B cell (primary cell): ENCODE measurements at regions of chr14 and their contacts with region 1.

Region 1: GRCh38 chr14:92612988-92613658 is 99.5 kb downstream of the RIN3 start:
- DNase-seq: peak; percentile 68
- ATAC-seq: no peak
- H3K4me3 ChIP-seq: no peak overlapping the region
- H3K4me3 Mint-ChIP-seq: peak overlapping the region; percentile 69
- H3K27ac ChIP-seq: peak overlapping the region in 1 of 2 donors; percentile 65
- H3K27ac Mint-ChIP-seq: peak overlapping the region; percentile 70
- H3K4me1 ChIP-seq: peaks cover 55 to 67% of the 10 kb centered on the region in 2 donors
- H3K4me1 Mint-ChIP-seq: peaks cover 73% of the 10 kb centered on the region
- H3K27me3 ChIP-seq: no peaks in the 10 kb centered on the region
- H3K27me3 Mint-ChIP-seq: no peaks in the 10 kb centered on the region
- CTCF ChIP-seq: peak; percentile 79

Region 2: DNA sequence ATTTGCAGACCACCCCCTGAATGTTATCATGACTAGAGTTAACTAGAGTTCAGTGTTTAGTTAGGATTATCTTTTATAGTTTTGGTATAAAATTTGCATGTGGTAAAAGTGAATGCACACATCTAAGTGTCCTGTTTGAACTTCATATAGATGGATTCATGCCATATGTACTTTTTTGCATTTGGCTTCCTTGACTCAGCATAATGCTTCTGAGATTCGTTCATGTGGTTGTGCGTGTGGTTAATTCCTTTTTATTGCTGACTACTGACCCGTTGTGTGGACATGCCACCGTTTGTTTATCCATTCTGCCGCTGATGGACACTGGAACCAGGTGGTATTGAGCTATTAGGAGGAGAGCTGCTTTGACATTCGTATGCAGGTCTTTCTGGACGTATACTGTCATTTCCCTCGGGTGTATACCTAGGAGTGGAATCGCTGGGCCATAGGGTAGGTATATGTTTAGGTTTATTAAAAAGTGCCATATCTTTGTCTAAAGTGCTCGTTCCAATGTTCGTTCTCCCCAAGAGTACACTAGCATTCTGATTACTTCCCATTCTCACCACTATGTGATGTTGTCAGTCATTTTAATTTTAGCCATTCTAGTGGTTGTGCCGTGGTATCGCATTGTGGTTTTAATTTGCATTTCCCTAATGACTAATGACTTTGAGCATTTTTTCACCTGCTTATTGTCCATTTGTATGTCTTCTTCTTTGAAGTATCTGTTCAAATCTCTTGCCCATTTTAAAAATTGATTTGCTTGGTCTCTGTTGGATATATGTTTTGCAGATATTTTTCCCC is 61.9 kb before region 1 on chr14:
- CTCF ChIA-PET with region 1: no interaction called
- POLR2A ChIA-PET with region 1: no interaction called
- intact Hi-C with region 1: loop called (anchors 10 kb)
- DNase-seq: peak; percentile 78
- ATAC-seq: peak; percentile 74
- H3K4me3 ChIP-seq: no peak overlapping the region
- H3K4me3 Mint-ChIP-seq: peak overlapping the region; percentile 38
- H3K27ac ChIP-seq: no peak overlapping the region
- H3K27ac Mint-ChIP-seq: no peak overlapping the region
- H3K4me1 ChIP-seq: peaks cover 36 to 38% of the 10 kb centered on the region in 2 donors
- H3K4me1 Mint-ChIP-seq: peaks cover 38% of the 10 kb centered on the region
- H3K27me3 ChIP-seq: peaks cover 0 to 17% (median 6%) of the 10 kb centered on the region in 4 experiments
- H3K27me3 Mint-ChIP-seq: peaks cover 29% of the 10 kb centered on the region
- CTCF ChIP-seq: peak; percentile 76

Region 3: GRCh38 chr14:92585981-92586937 is 26.9 kb before region 1 on chr14:
- CTCF ChIA-PET with region 1: interaction called, 29 read pairs
- POLR2A ChIA-PET with region 1: no interaction called
- intact Hi-C with region 1: no loop called
- DNase-seq: no peak
- ATAC-seq: no peak
- H3K4me3 ChIP-seq: no peak overlapping the region
- H3K4me3 Mint-ChIP-seq: peak overlapping the region; percentile 20
- H3K27ac ChIP-seq: peak overlapping the region in 1 of 2 donors; percentile 5
- H3K27ac Mint-ChIP-seq: peak overlapping the region; percentile 72
- H3K4me1 ChIP-seq: peaks cover 61 to 74% of the 10 kb centered on the region in 2 donors
- H3K4me1 Mint-ChIP-seq: peaks cover 77% of the 10 kb centered on the region
- H3K27me3 ChIP-seq: no peaks in the 10 kb centered on the region
- H3K27me3 Mint-ChIP-seq: no peaks in the 10 kb centered on the region
- CTCF ChIP-seq: no peak

Region 4: GRCh38 chr14:92637228-92637627 is 24.1 kb after region 1 on chr14:
- CTCF ChIA-PET with region 1: interaction called, 10 read pairs
- POLR2A ChIA-PET with region 1: interaction called, 3 read pairs
- intact Hi-C with region 1: loop called (anchors 2 kb)
- DNase-seq: no peak
- ATAC-seq: no peak
- H3K4me3 ChIP-seq: no peak overlapping the region
- H3K4me3 Mint-ChIP-seq: no peak overlapping the region
- H3K27ac ChIP-seq: no peak overlapping the region
- H3K27ac Mint-ChIP-seq: no peak overlapping the region
- H3K4me1 ChIP-seq: peaks cover 31 to 32% of the 10 kb centered on the region in 2 donors
- H3K4me1 Mint-ChIP-seq: peaks cover 34% of the 10 kb centered on the region
- H3K27me3 ChIP-seq: no peaks in the 10 kb centered on the region
- H3K27me3 Mint-ChIP-seq: no peaks in the 10 kb centered on the region
- CTCF ChIP-seq: no peak

Region 5: GRCh38 chr14:92656306-92657081 is 43.4 kb after region 1 on chr14:
- CTCF ChIA-PET with region 1: interaction called, 68 read pairs
- POLR2A ChIA-PET with region 1: interaction called, 16 read pairs
- intact Hi-C with region 1: loop called (anchors 1 kb)
- DNase-seq: peak; percentile 22
- ATAC-seq: no peak
- H3K4me3 ChIP-seq: peak overlapping the region in 2 of 5 experiments; percentile 41 to 80
- H3K4me3 Mint-ChIP-seq: peak overlapping the region; percentile 79
- H3K27ac ChIP-seq: peak overlapping the region in 1 of 2 donors; percentile 78
- H3K27ac Mint-ChIP-seq: peak overlapping the region; percentile 76
- H3K4me1 ChIP-seq: peaks cover 57 to 87% of the 10 kb centered on the region in 2 donors
- H3K4me1 Mint-ChIP-seq: peaks cover 73% of the 10 kb centered on the region
- H3K27me3 ChIP-seq: no peaks in the 10 kb centered on the region
- H3K27me3 Mint-ChIP-seq: no peaks in the 10 kb centered on the region
- CTCF ChIP-seq: no peak

Region 6: DNA sequence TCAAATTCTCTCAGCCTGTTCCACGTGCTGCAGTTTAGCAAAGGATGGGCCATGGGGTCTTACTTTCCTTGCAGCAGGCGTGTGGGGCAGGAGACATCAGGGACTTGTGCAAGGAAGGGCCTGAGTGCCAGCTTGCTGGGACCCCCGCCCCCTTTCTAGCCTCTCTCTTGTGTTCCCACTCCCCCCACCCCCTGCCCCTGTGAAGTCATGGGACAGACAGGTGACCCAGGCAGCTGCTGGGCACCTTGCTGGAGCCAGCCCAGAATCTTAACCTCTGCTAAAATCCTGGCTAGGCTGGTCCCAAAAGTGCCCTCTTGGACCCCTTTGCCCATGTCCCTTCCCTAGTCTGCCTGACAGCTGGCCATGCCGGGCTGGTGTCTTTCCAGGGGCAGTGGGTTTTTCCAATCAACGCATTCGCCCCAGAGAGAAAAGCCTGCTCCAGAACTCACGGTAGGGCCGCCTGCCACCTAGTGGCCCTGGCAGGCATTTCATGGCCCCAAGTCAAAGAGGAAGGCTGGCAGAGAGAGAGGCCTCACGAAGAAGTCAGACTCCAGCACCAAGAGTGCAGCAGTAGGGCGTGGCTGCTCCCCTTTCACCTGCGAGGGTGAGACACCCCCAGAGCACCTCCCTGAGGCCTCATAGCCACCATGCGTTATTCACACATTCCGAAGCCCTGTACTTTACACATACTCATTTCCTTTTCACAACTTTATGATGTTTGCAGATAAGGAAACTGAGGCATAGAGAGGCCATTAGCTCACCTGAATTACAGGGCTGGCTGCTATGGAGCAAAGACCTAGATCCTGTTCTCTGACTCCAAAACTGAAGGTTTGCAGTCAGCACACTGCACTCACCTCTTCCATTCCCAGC is 67.9 kb after region 1 on chr14:
- CTCF ChIA-PET with region 1: interaction called, 50 read pairs
- POLR2A ChIA-PET with region 1: interaction called, 7 read pairs
- intact Hi-C with region 1: loop called (anchors 1 kb)
- DNase-seq: peak; percentile 87
- ATAC-seq: peak; percentile 16
- H3K4me3 ChIP-seq: no peak overlapping the region
- H3K4me3 Mint-ChIP-seq: no peak overlapping the region
- H3K27ac ChIP-seq: peak overlapping the region; percentile 52 to 66
- H3K27ac Mint-ChIP-seq: peak overlapping the region; percentile 86
- H3K4me1 ChIP-seq: peaks cover 31% of the 10 kb centered on the region in 2 donors
- H3K4me1 Mint-ChIP-seq: peaks cover 38% of the 10 kb centered on the region
- H3K27me3 ChIP-seq: no peaks in the 10 kb centered on the region
- H3K27me3 Mint-ChIP-seq: no peaks in the 10 kb centered on the region
- CTCF ChIP-seq: peak; percentile 97